H1 (cell line): ENCODE measurements at regions of chr12 and their contacts with region 1.

Region 1: DNA sequence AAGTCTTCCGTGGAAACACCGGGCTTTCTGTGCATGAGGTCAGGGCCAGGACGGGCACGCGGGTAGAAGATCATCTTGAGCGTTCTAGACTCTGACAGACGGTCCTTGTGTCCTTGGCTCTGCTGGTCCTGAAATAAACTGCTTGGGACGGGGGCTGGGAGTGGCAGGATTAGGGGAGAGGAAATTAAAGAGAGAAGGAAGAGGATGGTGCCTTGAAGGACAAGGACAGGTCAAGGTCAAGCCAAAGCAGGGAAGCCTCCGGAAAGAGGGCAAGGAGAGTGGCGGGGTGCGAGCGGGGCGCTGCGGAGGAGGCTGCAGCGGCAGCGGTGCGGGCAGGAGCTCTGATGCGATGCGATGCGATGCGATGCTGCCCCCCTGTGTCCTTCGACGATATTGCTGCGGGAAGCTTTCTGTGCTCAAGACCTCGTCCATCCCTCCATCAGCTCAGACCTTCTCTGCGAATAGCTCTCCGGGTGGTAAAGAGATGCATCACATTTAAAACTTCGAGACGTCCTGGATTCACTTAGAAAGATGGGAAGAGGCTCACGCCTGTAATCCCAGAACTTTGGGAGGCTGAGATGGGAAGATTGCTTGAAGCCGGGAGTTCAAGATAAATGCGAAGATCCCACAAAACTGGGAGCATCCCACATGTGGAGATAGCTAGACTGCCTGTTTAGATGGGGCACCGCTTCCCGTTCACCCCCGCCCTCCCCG is 110.1 kb upstream of the TMEM132D start:
- DNase-seq: peak; percentile 62 to 87
- H3K4me3 ChIP-seq: peak overlapping the region in 1 of 4 experiments; percentile 45; a peak in 2 of 8 replicates
- H3K27ac ChIP-seq: no peak overlapping the region
- H3K4me1 ChIP-seq: peaks cover 0 to 11% (median 5%) of the 10 kb centered on the region in 4 experiments; a peak in 3 of 7 replicates
- H3K27me3 ChIP-seq: peaks cover 0 to 12% (median 7%) of the 10 kb centered on the region in 4 experiments; a peak in 3 of 7 replicates
- CTCF ChIP-seq: peak; percentile 81 to 92 (median 83)
- EP300 ChIP-seq: no peak
- POLR2A ChIP-seq: no peak
- RAD21 ChIP-seq: peak; percentile 88 to 93

Region 2: GRCh38 chr12:129069886-129070285 is 944.0 kb before region 1 on chr12:
- CTCF ChIA-PET with region 1: interaction called, 12 read pairs
- POLR2A ChIA-PET with region 1: no interaction called
- DNase-seq: peak in 1 of 2 experiments; percentile 79
- H3K4me3 ChIP-seq: no peak overlapping the region
- H3K27ac ChIP-seq: no peak overlapping the region
- H3K4me1 ChIP-seq: peaks cover 0 to 3% (median 2%) of the 10 kb centered on the region in 4 experiments; a peak in 2 of 7 replicates
- H3K27me3 ChIP-seq: no peaks in the 10 kb centered on the region; a peak in 2 of 7 replicates
- CTCF ChIP-seq: peak; percentile 54 to 87 (median 66)
- EP300 ChIP-seq: no peak
- POLR2A ChIP-seq: no peak
- RAD21 ChIP-seq: peak; percentile 69 to 73

Region 3: GRCh38 chr12:129927316-129927900 is 86.5 kb before region 1 on chr12:
- CTCF ChIA-PET with region 1: interaction called, 12 read pairs
- POLR2A ChIA-PET with region 1: no interaction called
- DNase-seq: no peak
- H3K4me3 ChIP-seq: no peak overlapping the region
- H3K27ac ChIP-seq: no peak overlapping the region
- H3K4me1 ChIP-seq: no peaks in the 10 kb centered on the region
- H3K27me3 ChIP-seq: no peaks in the 10 kb centered on the region; a peak in 2 of 7 replicates
- CTCF ChIP-seq: no peak
- EP300 ChIP-seq: no peak
- POLR2A ChIP-seq: no peak
- RAD21 ChIP-seq: no peak

Region 4: DNA sequence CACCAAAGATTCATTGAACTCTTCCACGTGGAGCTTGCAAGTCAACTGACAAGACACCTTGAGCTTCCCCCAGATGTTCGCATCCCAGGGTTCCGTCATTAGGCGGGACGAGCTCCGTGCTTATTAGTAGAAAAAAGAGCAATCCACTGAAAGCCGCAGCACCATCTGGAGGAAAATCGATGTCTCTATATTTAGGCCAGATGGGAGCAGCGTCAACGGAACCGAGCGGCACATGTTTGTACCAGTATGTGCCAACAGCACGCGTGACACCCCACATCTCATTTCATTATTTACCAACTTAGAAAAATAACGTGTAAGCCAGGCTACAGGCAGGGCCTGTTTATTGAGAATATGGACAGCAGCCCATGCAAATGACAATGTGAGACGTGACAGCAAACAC is 64.3 kb before region 1 on chr12:
- CTCF ChIA-PET with region 1: interaction called, 17 read pairs
- POLR2A ChIA-PET with region 1: no interaction called
- DNase-seq: no peak
- H3K4me3 ChIP-seq: no peak overlapping the region
- H3K27ac ChIP-seq: no peak overlapping the region
- H3K4me1 ChIP-seq: no peaks in the 10 kb centered on the region
- H3K27me3 ChIP-seq: peaks cover 0 to 2% (median 0%) of the 10 kb centered on the region in 4 experiments; a peak in 4 of 7 replicates
- CTCF ChIP-seq: no peak
- EP300 ChIP-seq: no peak
- POLR2A ChIP-seq: no peak
- RAD21 ChIP-seq: no peak

Region 5: GRCh38 chr12:129984106-129984505 is 29.8 kb before region 1 on chr12:
- CTCF ChIA-PET with region 1: interaction called, 19 read pairs
- POLR2A ChIA-PET with region 1: no interaction called
- DNase-seq: no peak
- H3K4me3 ChIP-seq: no peak overlapping the region
- H3K27ac ChIP-seq: no peak overlapping the region
- H3K4me1 ChIP-seq: no peaks in the 10 kb centered on the region; a peak in 1 of 7 replicates
- H3K27me3 ChIP-seq: peaks cover 0 to 2% (median 0%) of the 10 kb centered on the region in 4 experiments; a peak in 1 of 7 replicates
- CTCF ChIP-seq: no peak
- EP300 ChIP-seq: no peak
- POLR2A ChIP-seq: no peak
- RAD21 ChIP-seq: no peak

Region 6: GRCh38 chr12:130031571-130032189 is 17.8 kb after region 1 on chr12:
- CTCF ChIA-PET with region 1: interaction called, 66 read pairs
- POLR2A ChIA-PET with region 1: no interaction called
- DNase-seq: peak; percentile 59 to 99
- H3K4me3 ChIP-seq: no peak overlapping the region
- H3K27ac ChIP-seq: no peak overlapping the region
- H3K4me1 ChIP-seq: no peaks in the 10 kb centered on the region
- H3K27me3 ChIP-seq: peaks cover 0 to 15% (median under 1%) of the 10 kb centered on the region in 4 experiments; a peak in 4 of 7 replicates
- CTCF ChIP-seq: peak; percentile 92 to 100 (median 96)
- EP300 ChIP-seq: no peak
- POLR2A ChIP-seq: no peak
- RAD21 ChIP-seq: peak; percentile 72 to 83

Region 7: GRCh38 chr12:130076752-130077151 is 62.8 kb after region 1 on chr12:
- CTCF ChIA-PET with region 1: no interaction called
- POLR2A ChIA-PET with region 1: no interaction called
- DNase-seq: no peak
- H3K4me3 ChIP-seq: no peak overlapping the region
- H3K27ac ChIP-seq: no peak overlapping the region
- H3K4me1 ChIP-seq: peaks cover 2 to 12% (median 5%) of the 10 kb centered on the region in 4 experiments; a peak in 5 of 7 replicates
- H3K27me3 ChIP-seq: peaks cover 0 to 24% (median 18%) of the 10 kb centered on the region in 4 experiments; a peak in 6 of 7 replicates
- CTCF ChIP-seq: no peak
- EP300 ChIP-seq: no peak
- POLR2A ChIP-seq: no peak
- RAD21 ChIP-seq: no peak